Sciatic nerve (tissue), 2 donors: ENCODE measurements at regions of chr22 and their contacts with region 1.

Region 1: DNA sequence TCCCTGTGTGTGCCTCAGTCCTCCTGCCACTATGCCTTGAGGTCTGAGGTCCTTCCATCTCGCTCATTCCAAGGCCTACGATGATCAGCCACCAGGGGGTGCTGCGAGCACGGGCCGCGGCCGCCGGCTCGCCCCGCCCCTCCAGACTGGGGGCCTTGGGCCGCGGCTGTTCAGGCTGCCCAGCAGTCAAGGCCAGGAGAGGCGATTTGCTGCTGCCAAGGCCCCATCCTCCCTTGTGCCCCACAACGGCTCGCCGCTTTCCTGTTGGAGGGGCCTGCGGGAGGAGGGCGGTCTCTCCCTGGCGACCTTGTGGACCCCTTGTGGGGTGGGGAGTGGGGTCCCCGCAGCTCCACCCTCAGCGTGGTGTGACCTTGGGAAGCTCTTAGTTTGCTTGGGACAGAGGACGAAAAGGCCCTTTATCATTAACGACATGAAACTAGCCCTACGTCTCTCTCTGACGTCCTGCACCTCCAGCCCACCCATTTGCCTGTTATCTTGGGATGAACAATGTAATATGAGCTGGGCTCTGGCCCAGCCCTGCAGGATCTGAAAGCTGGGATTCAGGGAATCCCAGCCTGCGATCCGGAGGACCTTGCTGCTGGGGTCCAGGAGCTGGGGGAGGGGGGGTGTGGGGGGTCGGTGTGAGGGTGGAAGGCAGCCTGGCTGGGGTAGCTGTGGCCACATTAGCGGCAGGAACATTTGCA is 5.3 kb upstream of the GALR3 start:
- DNase-seq: peak; percentile 92
- ATAC-seq: peak; percentile 93

Region 2: GRCh38 chr22:37862570-37863325 is 44.9 kb after region 1 on chr22:
- intact Hi-C with region 1: loop called (anchors 1 kb)
- DNase-seq: no peak
- ATAC-seq: no peak